ENCODE measurements at regions of chr16 and their contacts with region 1.

Region 1: GRCh38 chr16:17578921-17579874 is 108.4 kb upstream of the XYLT1 start:
- DNase-seq: peak in 4 of 10 donors; percentile 14 to 39 (median 32)
- H3K4me3 ChIP-seq: no peak overlapping the region
- H3K27ac ChIP-seq: no peak overlapping the region
- H3K27me3 ChIP-seq: peaks cover 0 to 10% (median 0%) of the 10 kb centered on the region in 45 donors
- CTCF ChIP-seq: peak; percentile 34 to 87 (median 78)

Region 2: GRCh38 chr16:17476414-17477270 is 102.6 kb before region 1 on chr16:
- intact Hi-C with region 1: loop called in 1 of 2 experiments (anchors 10 kb)
- DNase-seq: peak in 1 of 10 donors; percentile 49
- H3K4me3 ChIP-seq: no peak overlapping the region
- H3K27ac ChIP-seq: no peak overlapping the region
- H3K27me3 ChIP-seq: peaks cover 0 to 15% (median 0%) of the 10 kb centered on the region in 45 donors
- CTCF ChIP-seq: peak in 55 of 56 donors; percentile 33 to 77 (median 62)

Region 3: DNA sequence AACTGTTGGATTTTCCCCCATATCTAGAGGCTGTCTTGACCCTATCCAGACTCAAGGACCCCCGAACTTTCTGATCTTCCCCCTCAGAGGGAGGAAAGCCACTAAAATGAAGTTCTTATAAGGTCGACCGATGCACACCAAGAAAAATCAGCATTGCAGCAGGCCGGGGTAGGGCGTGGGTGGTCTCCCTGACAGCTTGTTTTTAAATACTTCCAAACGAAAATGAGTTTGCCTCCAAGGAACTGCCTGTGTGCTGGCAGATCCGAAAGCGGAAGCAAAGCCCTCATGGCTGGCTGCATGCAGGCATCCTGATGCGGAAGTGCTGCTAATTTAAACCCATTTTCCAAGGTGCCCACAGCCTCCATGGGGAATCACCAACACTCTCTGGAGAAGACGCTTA is 265.8 kb after region 1 on chr16:
- intact Hi-C with region 1: no loop called
- DNase-seq: peak in 7 of 10 donors; percentile 12 to 74 (median 54)
- H3K4me3 ChIP-seq: no peak overlapping the region
- H3K27ac ChIP-seq: peak overlapping the region in 1 of 59 donors; percentile 21
- H3K27me3 ChIP-seq: peaks cover 0 to 4% (median 0%) of the 10 kb centered on the region in 45 donors
- CTCF ChIP-seq: no peak

Measured in dorsolateral prefrontal cortex (tissue), 120 donors.